Activated CD4-positive, alpha-beta memory T cell treated with anti-CD3 and anti-CD28 coated beads for 36 hours (primary cell): ENCODE measurements at regions of chr3 and their contacts with region 1.

Region 1: DNA sequence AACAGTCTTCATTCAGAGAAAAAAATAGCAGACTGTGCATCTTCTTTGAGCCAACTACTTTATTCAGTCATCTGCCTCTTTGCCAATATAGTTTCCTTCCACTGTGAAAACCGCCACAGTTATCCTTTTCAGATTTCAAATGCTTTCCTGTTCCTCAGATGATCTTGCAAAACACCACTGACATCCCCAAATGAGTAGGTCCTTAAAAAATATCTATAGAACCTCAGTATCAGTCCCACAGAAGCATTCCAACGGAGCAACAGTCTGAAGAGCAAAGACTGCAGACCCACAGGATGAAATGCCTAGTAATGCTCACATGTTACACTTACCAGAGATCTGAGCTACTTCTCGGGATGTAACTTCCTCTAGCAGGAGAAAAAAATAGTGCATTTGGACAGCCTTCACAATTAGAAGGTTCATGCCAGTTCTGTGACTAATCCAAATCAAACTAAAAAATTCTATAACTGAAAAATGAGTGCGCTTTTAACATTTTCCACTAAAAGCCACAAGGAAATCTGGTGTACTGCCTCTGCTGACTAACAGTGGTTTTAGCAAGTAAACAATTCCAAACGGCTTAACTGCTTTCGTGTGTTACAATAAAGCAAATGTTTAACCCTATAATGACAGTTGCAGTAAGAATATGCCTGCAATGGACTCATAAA is at the start of gene ANKRD28:
- DNase-seq: no peak
- H3K4me3 Mint-ChIP-seq: peak within 1 kb of the TSS; percentile 62
- H3K27ac Mint-ChIP-seq: peak within 1 kb of the TSS; percentile 91
- H3K4me1 Mint-ChIP-seq: peaks cover 76% of the 10 kb centered on the region
- H3K27me3 Mint-ChIP-seq: no peaks in the 10 kb centered on the region
- total RNA-seq, gene ANKRD28: 31.4 to 34.8 TPM

Region 2: GRCh38 chr3:15743587-15744009 is 54.2 kb before region 1 on chr3:
- CTCF ChIA-PET with region 1: no interaction called
- POLR2A ChIA-PET with region 1: no interaction called
- intact Hi-C with region 1: loop called (anchors 1 kb)
- DNase-seq: no peak
- H3K4me3 Mint-ChIP-seq: no peak overlapping the region
- H3K27ac Mint-ChIP-seq: no peak overlapping the region
- H3K4me1 Mint-ChIP-seq: peaks cover 40% of the 10 kb centered on the region
- H3K27me3 Mint-ChIP-seq: no peaks in the 10 kb centered on the region

Region 3: DNA sequence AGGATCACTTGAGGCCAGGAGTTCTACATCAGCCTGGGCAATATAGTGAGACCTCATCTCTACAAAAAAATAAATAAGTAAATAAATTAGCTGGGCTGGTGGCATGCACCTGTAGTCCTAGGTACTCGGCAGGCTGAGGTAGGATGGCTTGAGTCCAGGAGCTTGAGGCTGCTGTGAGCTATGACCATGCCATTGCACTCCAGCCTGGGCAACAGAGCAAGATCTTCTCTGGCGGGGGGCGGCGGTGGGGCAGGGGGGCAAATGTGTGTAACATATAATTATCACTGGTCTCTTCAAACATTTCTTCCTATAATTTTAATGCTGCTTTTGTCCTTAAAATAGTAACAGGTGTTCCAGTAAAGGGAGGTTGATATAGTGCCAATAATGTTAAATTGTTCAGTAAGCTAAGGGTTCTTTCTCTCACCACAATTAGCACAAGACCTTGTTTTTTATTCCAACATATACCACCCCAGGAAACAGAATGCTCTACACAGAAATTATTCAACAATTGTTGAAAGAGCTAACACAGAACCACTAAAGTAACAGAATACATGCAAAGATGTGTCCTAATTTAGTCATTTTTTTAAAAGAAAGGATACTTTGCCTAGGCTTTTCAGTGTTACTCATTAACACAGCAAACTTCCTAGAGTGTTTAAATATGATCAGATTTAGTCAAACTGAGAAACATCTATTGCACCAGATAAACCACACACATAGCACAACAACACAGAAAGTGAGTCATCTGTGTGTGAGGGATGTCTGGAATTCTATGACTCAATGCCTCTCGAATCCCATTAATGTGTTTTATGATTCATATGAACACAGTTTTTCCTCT is 29.1 kb before region 1 on chr3:
- CTCF ChIA-PET with region 1: interaction called, 4 read pairs
- POLR2A ChIA-PET with region 1: interaction called, 3 read pairs
- intact Hi-C with region 1: loop called (anchors 1 kb)
- DNase-seq: no peak
- H3K4me3 Mint-ChIP-seq: no peak overlapping the region
- H3K27ac Mint-ChIP-seq: peak overlapping the region; percentile 75
- H3K4me1 Mint-ChIP-seq: peaks cover 36% of the 10 kb centered on the region
- H3K27me3 Mint-ChIP-seq: no peaks in the 10 kb centered on the region

Region 4: GRCh38 chr3:15778332-15778858 is 19.4 kb before region 1 on chr3:
- CTCF ChIA-PET with region 1: no interaction called
- POLR2A ChIA-PET with region 1: interaction called, 8 read pairs
- intact Hi-C with region 1: loop called (anchors 1 kb)
- DNase-seq: no peak
- H3K4me3 Mint-ChIP-seq: no peak overlapping the region
- H3K27ac Mint-ChIP-seq: no peak overlapping the region
- H3K4me1 Mint-ChIP-seq: peaks cover 37% of the 10 kb centered on the region
- H3K27me3 Mint-ChIP-seq: no peaks in the 10 kb centered on the region

Region 5: GRCh38 chr3:15815696-15816095 is 17.9 kb after region 1 on chr3:
- CTCF ChIA-PET with region 1: interaction called, 14 read pairs
- POLR2A ChIA-PET with region 1: no interaction called
- intact Hi-C with region 1: no loop called
- DNase-seq: no peak
- H3K4me3 Mint-ChIP-seq: no peak overlapping the region
- H3K27ac Mint-ChIP-seq: no peak overlapping the region
- H3K4me1 Mint-ChIP-seq: peaks cover 48% of the 10 kb centered on the region
- H3K27me3 Mint-ChIP-seq: no peaks in the 10 kb centered on the region